ENCODE measurements at regions of chr6 and their contacts with region 1.

Region 1: GRCh38 chr6:31399589-31400466 is 3.6 kb upstream of the MICA start:
- DNase-seq: peak; percentile 91 to 93
- ATAC-seq: peak; percentile 71 to 82 (median 78)
- H3K4me3 ChIP-seq: peak overlapping the region; percentile 75
- H3K27ac ChIP-seq: peak overlapping the region; percentile 85
- H3K4me1 ChIP-seq: peaks cover 21% of the 10 kb centered on the region
- H3K27me3 ChIP-seq: no peaks in the 10 kb centered on the region
- CTCF ChIP-seq: peak; percentile 77

Region 2: DNA sequence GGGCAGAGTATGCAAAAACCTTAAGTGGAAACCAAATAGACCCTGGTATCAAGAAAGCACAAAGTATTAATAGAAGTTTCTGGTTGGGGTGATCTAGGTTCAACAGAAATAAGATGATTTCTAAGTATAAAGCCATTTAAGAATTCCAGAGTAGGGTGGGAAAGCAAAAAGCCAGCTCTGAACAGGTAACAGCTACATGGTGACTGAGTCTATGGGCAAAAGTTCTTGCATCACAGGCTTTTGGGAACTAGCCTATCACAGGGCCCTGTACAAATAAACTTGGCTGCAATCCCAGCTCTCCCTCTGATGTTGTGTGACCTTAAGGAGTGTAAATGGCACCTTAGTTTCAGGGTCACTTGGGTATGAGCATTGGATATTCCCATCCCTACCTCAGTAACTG is 235.9 kb before region 1 on chr6:
- intact Hi-C with region 1: no loop called
- DNase-seq: no peak
- ATAC-seq: no peak
- H3K4me3 ChIP-seq: no peak overlapping the region
- H3K27ac ChIP-seq: no peak overlapping the region
- H3K4me1 ChIP-seq: peaks cover 6% of the 10 kb centered on the region
- H3K27me3 ChIP-seq: no peaks in the 10 kb centered on the region
- CTCF ChIP-seq: no peak

Region 3: DNA sequence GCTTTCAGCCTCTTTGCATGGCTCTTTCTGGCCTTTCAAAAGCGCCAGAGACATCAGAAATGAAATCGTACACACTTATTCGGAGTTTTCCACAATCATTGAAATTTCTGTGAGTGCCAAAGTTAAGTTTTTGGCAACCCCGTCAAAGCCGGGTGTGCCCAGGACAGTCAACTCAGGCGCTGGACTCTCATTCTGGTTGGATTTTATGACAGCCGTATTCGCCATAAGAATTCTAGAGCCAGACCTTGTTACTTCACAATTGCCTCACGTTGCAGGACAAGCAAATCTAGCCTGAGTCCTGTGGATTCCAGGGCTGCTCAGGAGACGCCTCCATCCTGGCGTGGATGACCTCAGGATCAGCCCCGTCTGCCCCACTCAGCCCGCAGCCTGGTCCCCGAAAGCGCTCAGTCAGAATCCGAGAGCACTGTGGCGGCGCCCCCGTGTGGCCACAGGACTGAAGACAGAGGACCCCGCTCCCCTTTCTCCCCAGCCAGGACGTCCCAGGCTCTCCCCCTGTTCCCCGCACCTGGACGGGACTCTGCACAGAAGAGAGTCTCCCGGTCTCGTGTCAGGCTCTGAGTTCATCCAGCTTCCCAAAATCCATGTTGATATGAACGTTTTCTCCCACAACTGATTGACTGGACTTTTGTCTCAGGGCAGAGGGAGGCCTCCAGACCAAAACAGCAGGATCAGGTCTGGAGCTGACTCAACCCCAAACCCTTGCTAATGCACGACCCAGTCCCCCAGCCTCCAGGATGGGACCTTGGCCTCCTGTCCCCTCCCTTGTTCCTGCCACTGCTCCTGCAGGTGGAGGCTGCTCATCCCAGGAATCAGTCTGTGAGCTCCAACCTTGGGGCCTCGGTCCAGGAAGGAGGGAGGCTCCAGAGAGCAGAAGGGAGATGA is 41.8 kb after region 1 on chr6:
- intact Hi-C with region 1: loop called (anchors 2 kb)
- DNase-seq: peak; percentile 87 to 89
- ATAC-seq: peak; percentile 81 to 100 (median 96)
- H3K4me3 ChIP-seq: peak overlapping the region; percentile 43
- H3K27ac ChIP-seq: no peak overlapping the region
- H3K4me1 ChIP-seq: no peaks in the 10 kb centered on the region
- H3K27me3 ChIP-seq: peaks cover 0 to 5% (median 0%) of the 10 kb centered on the region in 3 donors
- CTCF ChIP-seq: peak; percentile 82